ENCODE measurements at regions of chr1 and their contacts with region 1.

Region 1: DNA sequence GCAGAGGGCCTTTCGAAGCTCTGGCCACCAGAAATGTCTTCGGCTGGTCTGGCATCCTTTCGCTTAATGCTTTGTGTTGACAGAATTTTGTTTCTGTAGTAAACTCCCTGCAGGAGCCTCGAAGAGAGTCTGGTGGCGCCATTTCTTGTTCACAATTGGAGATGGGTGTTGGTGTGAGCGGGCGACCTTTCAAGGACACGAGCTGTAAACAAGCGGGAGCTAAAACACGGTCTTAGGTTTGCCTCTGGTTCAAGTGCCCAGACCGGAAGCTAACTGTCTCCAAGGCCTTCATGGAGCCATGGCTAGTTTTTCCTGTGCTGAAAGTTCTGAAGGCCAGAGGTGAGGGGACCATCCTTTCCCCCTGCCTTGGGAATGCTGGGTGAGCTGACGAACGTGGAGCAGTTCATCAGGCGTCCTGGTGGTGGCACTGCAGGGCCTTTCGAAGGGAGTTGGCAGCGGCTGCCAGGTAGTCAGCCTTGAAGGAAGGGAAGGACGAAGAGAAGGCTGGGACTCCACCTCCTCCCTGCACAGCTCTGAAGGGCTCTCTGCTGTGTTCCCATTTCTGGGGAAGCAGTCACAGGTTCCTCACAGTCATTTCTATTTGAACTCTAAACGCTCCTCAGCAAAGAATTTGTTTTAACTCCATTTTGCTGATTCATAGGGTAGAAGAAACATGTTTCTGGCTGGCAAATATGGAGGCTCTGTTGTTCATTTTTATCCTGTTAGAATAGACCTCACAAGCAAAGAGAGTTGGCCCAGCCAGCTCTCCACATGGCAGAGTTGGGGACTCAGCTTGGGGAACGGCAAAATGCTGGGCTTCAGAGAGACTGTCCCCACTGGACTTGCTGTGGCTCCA is 35.2 kb downstream of the URB2 start:
- DNase-seq: peak; percentile 36
- ATAC-seq: peak; percentile 90
- H3K4me3 ChIP-seq: no peak overlapping the region
- H3K27ac ChIP-seq: no peak overlapping the region
- H3K4me1 ChIP-seq: no peaks in the 10 kb centered on the region
- H3K27me3 ChIP-seq: no peaks in the 10 kb centered on the region
- CTCF ChIP-seq: peak; percentile 87

Region 2: DNA sequence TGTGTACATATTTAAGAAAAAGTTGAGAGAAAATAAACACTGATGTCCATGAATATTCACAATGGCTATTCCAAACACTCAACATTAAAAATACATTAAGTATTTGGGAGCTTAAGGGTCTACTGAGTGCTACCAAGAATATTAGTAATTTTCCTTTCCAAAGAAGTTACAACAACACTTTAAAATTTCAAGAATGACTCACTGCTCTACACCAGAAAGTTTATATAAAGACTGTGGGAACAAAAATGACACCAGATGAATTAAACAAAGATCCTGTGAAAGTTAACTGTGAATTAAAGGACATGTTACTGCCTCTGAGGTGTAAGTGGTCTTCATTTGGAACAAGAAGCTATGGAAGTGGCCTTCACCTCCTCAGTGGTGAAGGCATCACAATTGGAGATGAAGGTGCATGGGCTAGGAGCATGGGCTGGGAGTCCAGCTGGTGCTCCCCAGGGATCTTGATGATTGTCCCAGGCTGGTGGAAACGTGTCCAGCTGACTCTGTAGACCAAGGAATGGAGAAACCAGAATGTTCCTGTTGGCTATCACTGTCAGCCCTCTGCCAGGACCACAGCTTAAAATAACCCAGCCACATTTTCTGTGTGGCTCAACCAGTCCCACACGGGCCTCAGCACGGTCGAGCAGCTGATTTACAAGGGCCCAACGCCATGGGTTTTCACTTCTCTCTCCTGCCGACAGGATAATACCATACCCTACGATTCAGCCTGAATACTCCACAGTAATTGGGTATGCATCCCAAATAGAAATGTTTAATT is 64.1 kb before region 1 on chr1:
- CTCF ChIA-PET with region 1: no interaction called
- POLR2A ChIA-PET with region 1: no interaction called
- in situ Hi-C with region 1: no loop called
- intact Hi-C with region 1: no loop called
- DNase-seq: no peak
- ATAC-seq: no peak
- H3K4me3 ChIP-seq: no peak overlapping the region
- H3K27ac ChIP-seq: no peak overlapping the region
- H3K4me1 ChIP-seq: no peaks in the 10 kb centered on the region
- H3K27me3 ChIP-seq: no peaks in the 10 kb centered on the region
- CTCF ChIP-seq: no peak

Region 3: DNA sequence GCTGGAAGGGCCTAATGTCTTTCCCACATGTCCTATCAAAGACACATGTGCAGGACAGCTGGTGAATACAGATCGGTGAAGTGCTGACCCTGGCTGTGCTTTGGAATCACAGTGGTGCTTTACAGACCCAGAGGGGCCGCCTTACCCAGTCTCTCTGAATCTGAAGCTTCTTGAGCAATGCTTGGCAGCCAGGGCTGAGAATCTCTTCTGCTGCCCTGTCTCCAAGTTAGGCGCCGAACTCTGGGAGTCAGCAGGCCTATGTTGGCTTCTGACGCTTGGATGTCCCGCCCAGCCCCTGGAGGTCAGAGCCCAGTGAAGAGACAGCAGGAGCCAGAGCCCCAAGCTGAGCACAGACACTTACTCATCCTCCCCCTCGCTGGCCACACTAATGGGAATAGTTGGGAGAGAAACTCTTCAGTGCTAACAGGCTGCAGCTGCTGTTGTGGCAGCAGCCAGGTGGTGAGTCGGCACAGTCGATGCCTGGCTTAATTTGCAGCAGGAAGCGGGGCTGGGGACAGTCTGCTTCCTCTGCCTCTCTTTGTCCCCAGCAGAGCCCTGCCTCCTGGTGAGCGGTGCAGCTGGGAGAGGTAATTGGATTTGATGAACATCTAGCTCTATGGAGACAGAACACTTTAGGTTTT is 32.9 kb after region 1 on chr1:
- CTCF ChIA-PET with region 1: no interaction called
- POLR2A ChIA-PET with region 1: no interaction called
- in situ Hi-C with region 1: no loop called
- intact Hi-C with region 1: no loop called
- DNase-seq: no peak
- ATAC-seq: no peak
- H3K4me3 ChIP-seq: no peak overlapping the region
- H3K27ac ChIP-seq: no peak overlapping the region
- H3K4me1 ChIP-seq: no peaks in the 10 kb centered on the region
- H3K27me3 ChIP-seq: no peaks in the 10 kb centered on the region
- CTCF ChIP-seq: no peak

Region 4: GRCh38 chr1:229832695-229833094 is 171.4 kb after region 1 on chr1:
- CTCF ChIA-PET with region 1: no interaction called
- POLR2A ChIA-PET with region 1: no interaction called
- in situ Hi-C with region 1: no loop called
- intact Hi-C with region 1: no loop called
- DNase-seq: no peak
- ATAC-seq: no peak
- H3K4me3 ChIP-seq: no peak overlapping the region
- H3K27ac ChIP-seq: no peak overlapping the region
- H3K4me1 ChIP-seq: no peaks in the 10 kb centered on the region
- H3K27me3 ChIP-seq: peaks cover 15% of the 10 kb centered on the region
- CTCF ChIP-seq: no peak

Region 5: DNA sequence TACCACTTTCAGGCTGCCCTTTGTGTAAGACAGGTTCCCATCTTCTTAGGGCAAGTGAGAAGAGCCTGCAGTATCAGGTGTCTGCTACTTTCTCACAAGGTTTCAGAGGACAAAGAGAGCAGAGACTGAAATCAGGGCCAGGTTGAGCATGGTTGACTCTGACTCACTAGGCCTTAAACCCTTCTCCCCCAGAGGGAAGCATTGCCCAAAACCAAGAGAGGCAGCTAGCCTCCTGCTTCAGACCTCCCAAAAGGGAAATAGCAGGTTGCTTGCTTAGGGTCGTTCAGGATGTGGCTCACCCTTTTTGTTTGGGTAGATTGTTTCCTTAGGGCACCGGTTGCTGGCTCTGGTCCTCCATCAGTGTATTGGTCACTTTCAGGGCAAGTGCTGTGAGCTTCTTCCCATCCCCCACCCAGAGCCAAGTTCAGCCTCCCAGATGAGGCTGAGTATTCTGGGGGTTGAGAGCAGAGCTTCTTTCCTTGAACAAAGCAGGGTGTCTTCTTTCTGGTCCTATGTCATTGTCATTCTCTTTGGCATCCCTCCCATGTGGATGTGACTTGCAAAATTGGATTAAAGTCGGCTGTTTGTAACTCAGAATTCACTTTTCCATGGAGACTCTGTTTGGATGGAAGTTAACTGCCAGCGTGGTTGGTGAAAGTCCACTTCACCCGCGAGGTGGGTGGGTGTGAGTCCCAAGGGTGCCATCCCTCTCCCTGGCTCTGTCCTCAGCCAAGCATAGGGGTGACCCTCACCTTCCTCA is 350.3 kb after region 1 on chr1:
- CTCF ChIA-PET with region 1: no interaction called
- POLR2A ChIA-PET with region 1: no interaction called
- in situ Hi-C with region 1: no loop called
- intact Hi-C with region 1: no loop called
- DNase-seq: no peak
- ATAC-seq: no peak
- H3K4me3 ChIP-seq: no peak overlapping the region
- H3K27ac ChIP-seq: no peak overlapping the region
- H3K4me1 ChIP-seq: no peaks in the 10 kb centered on the region
- H3K27me3 ChIP-seq: peaks cover 5% of the 10 kb centered on the region; the same call in 1 of the 2 replicates
- CTCF ChIP-seq: no peak

Region 6: DNA sequence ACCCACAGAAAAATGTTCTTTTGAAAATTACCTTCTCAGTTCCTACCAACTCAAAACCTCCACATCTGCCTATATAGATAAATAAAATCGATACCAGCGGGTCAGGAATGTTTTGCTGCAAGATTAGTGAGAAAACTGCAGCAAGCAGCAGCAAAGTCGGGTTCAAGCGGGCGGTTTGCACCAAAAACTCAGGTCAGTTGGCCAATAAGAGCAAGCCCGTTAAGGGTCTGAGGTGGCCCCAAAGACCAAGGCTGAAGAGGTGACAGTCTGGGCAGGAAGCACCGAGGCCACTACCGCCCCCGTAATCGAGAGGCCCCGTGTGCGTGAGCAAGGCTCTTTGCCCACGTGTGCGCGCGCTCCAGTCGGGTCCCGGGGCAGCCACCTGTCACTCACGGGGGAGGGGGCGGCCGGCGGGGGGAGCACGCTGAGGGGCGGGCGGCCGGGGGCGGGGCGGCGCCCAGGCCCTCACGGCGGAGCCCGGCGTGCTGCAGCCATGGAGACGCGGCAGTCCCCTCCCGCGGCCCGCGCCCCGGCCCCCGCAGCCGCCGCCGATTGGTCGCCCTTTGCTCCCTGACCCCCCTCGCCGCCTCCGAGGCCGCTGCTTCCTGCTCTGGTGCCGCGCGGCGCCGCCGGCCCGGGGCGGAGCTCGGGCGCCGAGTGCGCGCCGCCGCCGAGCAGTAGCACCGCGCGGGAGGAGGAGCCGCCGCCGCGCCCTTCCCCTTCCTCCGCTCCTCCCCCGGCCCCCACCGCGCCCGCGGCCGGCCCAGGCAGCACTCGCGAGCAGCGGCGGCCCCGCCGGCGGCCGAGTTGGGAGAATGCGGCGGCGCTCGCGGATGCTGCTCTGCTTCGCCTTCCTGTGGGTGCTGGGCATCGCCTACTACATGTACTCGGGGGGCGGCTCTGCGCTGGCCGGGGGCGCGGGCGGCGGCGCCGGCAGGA is 405.5 kb after region 1 on chr1 and contains the start of gene GALNT2:
- CTCF ChIA-PET with region 1: no interaction called
- POLR2A ChIA-PET with region 1: no interaction called
- in situ Hi-C with region 1: no loop called
- intact Hi-C with region 1: loop called (anchors 10 kb)
- DNase-seq: no peak
- ATAC-seq: peak; percentile 96
- H3K4me3 ChIP-seq: peak within 1 kb of the TSS; percentile 75 to 89
- H3K27ac ChIP-seq: peak within 1 kb of the TSS; percentile 94
- H3K4me1 ChIP-seq: peaks cover 35% of the 10 kb centered on the region
- H3K27me3 ChIP-seq: no peaks in the 10 kb centered on the region
- CTCF ChIP-seq: peak; percentile 28; the same call in 1 of the 2 replicates
- total RNA-seq, gene GALNT2: 152 TPM

Region 7: GRCh38 chr1:230167419-230167852 is 506.2 kb after region 1 on chr1:
- CTCF ChIA-PET with region 1: no interaction called
- POLR2A ChIA-PET with region 1: no interaction called
- in situ Hi-C with region 1: no loop called
- intact Hi-C with region 1: loop called (anchors 10 kb)
- DNase-seq: peak; percentile 25
- ATAC-seq: peak; percentile 87
- H3K4me3 ChIP-seq: no peak overlapping the region
- H3K27ac ChIP-seq: no peak overlapping the region
- H3K4me1 ChIP-seq: no peaks in the 10 kb centered on the region
- H3K27me3 ChIP-seq: no peaks in the 10 kb centered on the region
- CTCF ChIP-seq: peak; percentile 88

Region 8: GRCh38 chr1:230310381-230311163 is 649.3 kb after region 1 on chr1:
- CTCF ChIA-PET with region 1: interaction called, 9 read pairs
- POLR2A ChIA-PET with region 1: no interaction called
- in situ Hi-C with region 1: no loop called
- intact Hi-C with region 1: loop called (anchors 10 kb)
- DNase-seq: peak; percentile 65
- ATAC-seq: peak; percentile 94
- H3K4me3 ChIP-seq: no peak overlapping the region; a peak in 1 of 4 replicates
- H3K27ac ChIP-seq: no peak overlapping the region
- H3K4me1 ChIP-seq: no peaks in the 10 kb centered on the region
- H3K27me3 ChIP-seq: peaks cover 4% of the 10 kb centered on the region
- CTCF ChIP-seq: peak; percentile 91